Transverse colon (tissue), 4 donors: ENCODE measurements at regions of chr15 and their contacts with region 1.

Region 1: GRCh38 chr15:25883463-25884259 is 20.5 kb upstream of the ATP10A start:
- DNase-seq: no peak
- H3K4me3 ChIP-seq: no peak overlapping the region
- H3K27ac ChIP-seq: no peak overlapping the region
- H3K4me1 ChIP-seq: no peaks in the 10 kb centered on the region
- H3K27me3 ChIP-seq: no peaks in the 10 kb centered on the region
- CTCF ChIP-seq: no peak
- EP300 ChIP-seq: no peak
- POLR2A ChIP-seq: no peak

Region 2: GRCh38 chr15:25989327-25989726 is 105.7 kb after region 1 on chr15:
- in situ Hi-C with region 1: loop called in 1 of 4 experiments (anchors 25 kb)
- intact Hi-C with region 1: no loop called
- DNase-seq: no peak
- H3K4me3 ChIP-seq: no peak overlapping the region
- H3K27ac ChIP-seq: no peak overlapping the region
- H3K4me1 ChIP-seq: no peaks in the 10 kb centered on the region
- H3K27me3 ChIP-seq: no peaks in the 10 kb centered on the region
- CTCF ChIP-seq: no peak
- EP300 ChIP-seq: no peak
- POLR2A ChIP-seq: no peak

Region 3: GRCh38 chr15:26103002-26103404 is 219.3 kb after region 1 on chr15:
- in situ Hi-C with region 1: no loop called
- intact Hi-C with region 1: no loop called
- DNase-seq: no peak
- H3K4me3 ChIP-seq: no peak overlapping the region
- H3K27ac ChIP-seq: no peak overlapping the region
- H3K4me1 ChIP-seq: no peaks in the 10 kb centered on the region
- H3K27me3 ChIP-seq: no peaks in the 10 kb centered on the region
- CTCF ChIP-seq: no peak
- EP300 ChIP-seq: no peak
- POLR2A ChIP-seq: no peak